Heart left ventricle (tissue), 16 donors: ENCODE measurements at regions of chr10 and their contacts with region 1.

Region 1: GRCh38 chr10:26172131-26172530 is 44.4 kb upstream of the GAD2 start:
- DNase-seq: no peak
- ATAC-seq: no peak
- H3K4me3 ChIP-seq: no peak overlapping the region
- H3K27ac ChIP-seq: no peak overlapping the region
- H3K4me1 ChIP-seq: no peaks in the 10 kb centered on the region
- H3K27me3 ChIP-seq: peaks cover 0 to 5% (median 0%) of the 10 kb centered on the region in 9 donors
- CTCF ChIP-seq: no peak
- POLR2A ChIP-seq: no peak

Region 2: DNA sequence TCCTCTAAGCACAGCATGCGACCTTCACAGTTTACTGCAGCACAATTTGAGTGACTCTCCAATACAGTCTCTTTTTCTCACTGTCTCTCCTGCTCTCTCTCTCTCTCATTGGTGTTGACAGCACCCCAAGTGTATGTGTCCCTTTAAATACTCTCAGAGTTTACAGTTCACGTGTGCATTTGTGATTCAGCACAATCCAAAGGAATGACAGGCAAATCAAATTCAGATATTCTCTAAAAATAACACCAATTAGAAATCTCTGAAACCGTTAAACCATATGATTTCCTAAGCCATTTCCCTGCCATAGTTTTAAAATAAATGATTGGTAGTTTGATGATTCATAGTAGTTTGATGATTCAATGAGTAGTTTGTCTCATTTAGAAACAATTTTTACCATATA is 59.6 kb before region 1 on chr10:
- intact Hi-C with region 1: no loop called
- DNase-seq: no peak
- ATAC-seq: no peak
- H3K4me3 ChIP-seq: no peak overlapping the region
- H3K27ac ChIP-seq: no peak overlapping the region
- H3K4me1 ChIP-seq: no peaks in the 10 kb centered on the region
- H3K27me3 ChIP-seq: no peaks in the 10 kb centered on the region
- CTCF ChIP-seq: no peak
- POLR2A ChIP-seq: no peak

Region 3: DNA sequence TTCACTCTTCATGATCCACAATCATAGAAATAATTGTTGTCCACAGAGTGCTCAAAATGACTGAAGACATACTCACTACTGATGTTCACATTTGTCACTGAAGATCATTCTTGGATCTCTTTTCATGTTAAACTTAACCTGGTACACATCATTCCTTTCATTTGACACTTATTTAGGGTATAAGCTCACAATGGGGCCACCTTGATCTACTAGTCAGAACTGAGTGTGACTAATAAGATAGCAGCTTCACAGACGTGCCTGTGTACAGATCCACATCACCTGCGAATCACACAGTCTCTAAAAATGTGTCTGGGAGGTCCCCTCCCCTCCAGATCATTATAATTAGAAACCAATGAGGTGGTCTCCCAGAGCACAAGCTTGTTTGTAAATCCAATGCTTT is 66.2 kb after region 1 on chr10:
- intact Hi-C with region 1: loop called in 1 of 10 experiments (anchors 10 kb)
- DNase-seq: no peak
- ATAC-seq: no peak
- H3K4me3 ChIP-seq: no peak overlapping the region
- H3K27ac ChIP-seq: no peak overlapping the region
- H3K4me1 ChIP-seq: no peaks in the 10 kb centered on the region
- H3K27me3 ChIP-seq: peaks cover 0 to 4% (median 0%) of the 10 kb centered on the region in 9 donors
- CTCF ChIP-seq: no peak
- POLR2A ChIP-seq: no peak

Region 4: GRCh38 chr10:26336979-26337378 is 164.8 kb after region 1 on chr10:
- intact Hi-C with region 1: no loop called
- DNase-seq: no peak
- ATAC-seq: no peak
- H3K4me3 ChIP-seq: no peak overlapping the region
- H3K27ac ChIP-seq: no peak overlapping the region
- H3K4me1 ChIP-seq: no peaks in the 10 kb centered on the region
- H3K27me3 ChIP-seq: no peaks in the 10 kb centered on the region
- CTCF ChIP-seq: no peak
- POLR2A ChIP-seq: no peak

Region 5: DNA sequence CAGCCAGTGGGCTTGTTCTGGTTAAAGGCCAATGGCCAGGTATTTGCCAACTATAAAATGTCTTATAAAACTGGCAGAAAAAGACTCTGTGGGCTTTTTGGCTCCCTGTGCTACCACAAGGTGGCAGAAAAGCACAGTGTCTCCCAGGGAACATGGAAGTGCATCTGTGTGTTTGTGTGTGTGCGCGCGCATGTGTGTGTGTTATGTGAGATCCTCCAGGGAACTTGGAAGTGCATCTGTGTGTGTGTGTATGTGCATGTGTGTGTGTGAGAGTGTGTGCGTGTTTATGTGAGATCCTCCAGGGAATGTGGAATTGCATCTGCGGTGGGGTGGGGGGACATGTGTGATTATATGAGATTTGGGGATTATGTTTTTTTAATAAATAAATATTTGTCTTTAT is 718.8 kb after region 1 on chr10:
- intact Hi-C with region 1: no loop called
- DNase-seq: peak in 1 of 5 donors; percentile 32
- ATAC-seq: no peak
- H3K4me3 ChIP-seq: no peak overlapping the region
- H3K27ac ChIP-seq: no peak overlapping the region
- H3K4me1 ChIP-seq: no peaks in the 10 kb centered on the region
- H3K27me3 ChIP-seq: peaks cover 0 to 11% (median 0%) of the 10 kb centered on the region in 9 donors
- CTCF ChIP-seq: peak in 8 of 12 donors; percentile 14 to 36 (median 22)
- POLR2A ChIP-seq: no peak